Activated CD8-positive, alpha-beta T cell treated with anti-CD3 and anti-CD28 coated beads for 36 hours (primary cell): ENCODE measurements at regions of chr6 and their contacts with region 1.

Region 1: DNA sequence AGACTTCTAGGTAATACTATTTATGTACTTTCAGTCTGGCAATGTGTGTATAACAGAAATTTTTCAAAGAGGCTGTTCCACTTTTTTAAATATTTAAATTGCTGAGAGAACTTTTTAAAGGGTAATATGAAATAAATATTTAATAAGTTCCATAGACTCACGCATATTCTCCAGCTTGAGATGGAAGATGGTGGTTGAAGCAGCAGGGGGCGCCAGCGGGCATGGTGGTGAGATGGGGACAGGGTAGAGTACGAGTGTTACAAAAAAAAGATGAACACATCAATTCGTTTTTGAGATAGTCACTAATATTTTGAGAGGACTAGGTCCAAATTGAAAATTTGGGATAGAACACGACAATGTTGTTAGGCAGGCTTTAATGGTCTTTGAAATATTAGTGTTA is 68.4 kb downstream of the RSPO3 start:
- DNase-seq: peak; percentile 82
- ATAC-seq: peak; percentile 56
- H3K4me3 Mint-ChIP-seq: no peak overlapping the region
- H3K27ac Mint-ChIP-seq: no peak overlapping the region
- H3K4me1 Mint-ChIP-seq: no peaks in the 10 kb centered on the region
- H3K27me3 Mint-ChIP-seq: peaks cover 10% of the 10 kb centered on the region
- CTCF ChIP-seq: peak; percentile 78

Region 2: DNA sequence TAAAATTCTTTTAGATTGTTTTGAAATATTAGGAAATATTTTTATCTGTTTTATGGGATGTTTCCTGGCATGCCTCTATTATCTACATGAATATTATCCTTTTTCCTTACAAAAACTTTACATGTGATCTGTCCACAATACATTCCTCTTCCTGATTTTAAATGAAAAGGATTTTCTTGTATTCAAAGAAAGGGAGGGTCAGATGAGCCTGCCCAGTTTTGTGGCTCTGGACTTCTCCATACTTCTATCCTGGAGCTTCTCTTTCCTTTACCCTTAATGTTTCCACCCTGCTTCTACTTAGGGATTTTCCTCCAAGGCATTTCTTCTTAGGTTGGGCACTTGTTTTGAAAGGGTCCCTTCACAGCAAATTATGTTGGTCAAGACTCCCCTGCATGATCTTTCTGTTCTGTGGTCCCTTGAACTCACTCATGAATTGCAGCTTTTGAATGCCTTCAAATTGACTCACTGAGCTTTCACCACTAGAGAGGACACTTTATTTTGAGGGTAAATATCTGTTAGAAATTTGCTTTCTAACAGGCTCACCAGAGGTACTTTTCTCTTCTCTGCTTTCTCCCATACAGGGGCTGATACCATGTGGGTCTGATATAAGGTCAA is 742.1 kb before region 1 on chr6:
- CTCF ChIA-PET with region 1: no interaction called
- POLR2A ChIA-PET with region 1: no interaction called
- intact Hi-C with region 1: no loop called
- DNase-seq: no peak
- ATAC-seq: no peak
- H3K4me3 Mint-ChIP-seq: no peak overlapping the region
- H3K27ac Mint-ChIP-seq: no peak overlapping the region
- H3K4me1 Mint-ChIP-seq: no peaks in the 10 kb centered on the region
- H3K27me3 Mint-ChIP-seq: peaks cover 1% of the 10 kb centered on the region
- CTCF ChIP-seq: no peak

Region 3: GRCh38 chr6:127173156-127173940 is 13.5 kb before region 1 on chr6:
- CTCF ChIA-PET with region 1: interaction called, 10 read pairs
- POLR2A ChIA-PET with region 1: no interaction called
- intact Hi-C with region 1: no loop called
- DNase-seq: no peak
- ATAC-seq: no peak
- H3K4me3 Mint-ChIP-seq: no peak overlapping the region
- H3K27ac Mint-ChIP-seq: no peak overlapping the region
- H3K4me1 Mint-ChIP-seq: no peaks in the 10 kb centered on the region
- H3K27me3 Mint-ChIP-seq: peaks cover 15% of the 10 kb centered on the region
- CTCF ChIP-seq: no peak

Region 4: DNA sequence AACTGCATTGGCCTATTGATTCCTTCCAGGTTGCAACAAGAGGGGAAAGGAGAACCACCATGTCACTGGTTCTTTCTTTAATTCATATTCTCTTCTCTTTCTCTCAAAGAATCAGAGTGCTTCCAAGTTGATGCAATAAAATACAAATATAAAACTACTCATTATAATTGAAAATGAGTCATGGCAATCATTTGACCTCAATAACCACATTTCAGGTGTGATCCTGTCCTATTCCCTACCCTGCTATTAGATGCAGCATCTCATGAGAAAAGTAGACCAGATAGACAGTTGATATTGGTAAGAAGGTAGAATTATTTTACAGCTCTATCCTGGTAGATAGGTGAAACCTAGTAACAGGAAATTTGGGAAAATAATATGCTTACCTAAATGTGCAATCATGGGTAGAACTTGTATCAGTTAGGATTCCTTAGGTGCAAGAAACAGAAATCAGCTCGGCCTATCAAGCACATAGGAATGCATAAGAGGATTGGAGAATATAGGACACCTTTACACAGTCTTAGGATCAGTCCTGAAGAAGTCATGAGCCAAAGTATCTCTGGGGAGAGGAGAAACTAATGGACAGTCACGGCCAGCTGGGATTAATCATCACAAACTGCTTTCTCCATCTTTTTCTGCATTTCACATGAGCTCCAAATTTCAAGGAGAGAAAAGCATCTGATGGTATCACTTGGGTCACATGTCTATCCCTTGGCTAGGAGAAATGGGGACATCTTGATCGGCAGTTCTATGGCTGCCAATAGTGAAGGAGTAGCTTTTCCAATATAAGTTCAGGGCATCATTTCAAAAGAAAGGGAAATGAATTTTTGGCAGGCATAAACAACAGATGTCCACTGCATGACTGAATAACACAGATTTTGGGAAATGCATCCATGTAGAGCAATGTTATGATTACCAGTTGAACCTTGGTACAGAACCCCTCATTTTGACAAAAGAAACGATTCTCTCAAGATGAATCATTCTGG is 60.5 kb after region 1 on chr6:
- CTCF ChIA-PET with region 1: no interaction called
- POLR2A ChIA-PET with region 1: no interaction called
- intact Hi-C with region 1: no loop called
- DNase-seq: no peak
- ATAC-seq: no peak
- H3K4me3 Mint-ChIP-seq: no peak overlapping the region
- H3K27ac Mint-ChIP-seq: no peak overlapping the region
- H3K4me1 Mint-ChIP-seq: no peaks in the 10 kb centered on the region
- H3K27me3 Mint-ChIP-seq: peaks cover 4% of the 10 kb centered on the region
- CTCF ChIP-seq: no peak

Region 5: DNA sequence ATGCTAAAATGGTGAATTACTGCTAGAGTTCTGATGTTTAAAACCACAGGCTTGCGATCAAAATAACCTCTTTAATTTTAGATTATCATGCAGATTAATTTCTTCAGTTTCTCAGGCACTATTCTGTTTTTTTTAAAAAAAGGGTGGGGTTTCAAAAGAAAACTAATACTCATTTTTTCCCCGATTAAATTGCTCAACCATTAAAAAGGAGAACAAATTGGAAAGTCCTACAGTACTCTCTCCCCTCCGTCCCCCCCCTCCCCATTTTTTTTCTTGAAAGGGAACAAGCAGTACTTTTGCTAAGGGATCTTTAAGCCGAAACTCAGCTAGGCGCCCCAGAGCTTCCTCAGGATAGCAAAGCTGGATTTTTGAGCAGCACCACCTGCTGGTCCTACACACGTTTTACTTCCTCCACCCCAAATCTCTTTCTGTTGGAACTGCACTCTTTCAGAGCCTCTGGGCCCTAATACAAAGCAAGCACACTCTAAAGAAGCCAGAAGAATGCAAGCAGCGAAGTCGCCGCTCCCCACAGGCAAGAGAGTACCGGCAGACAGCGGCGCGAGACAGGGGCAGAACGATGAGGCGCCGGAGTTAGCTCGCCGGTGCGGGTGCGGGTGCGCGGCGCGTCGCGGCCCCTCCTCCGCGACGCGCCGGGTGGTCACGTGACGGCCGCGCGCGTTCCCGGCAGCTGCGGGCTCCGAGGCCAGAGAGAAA is 79.4 kb after region 1 on chr6 and contains the start of gene RNF146:
- CTCF ChIA-PET with region 1: interaction called, 22 read pairs
- POLR2A ChIA-PET with region 1: interaction called, 3 read pairs
- intact Hi-C with region 1: no loop called
- DNase-seq: peak; percentile 73
- ATAC-seq: peak; percentile 76
- H3K4me3 Mint-ChIP-seq: peak within 1 kb of the TSS; percentile 93
- H3K27ac Mint-ChIP-seq: peak within 1 kb of the TSS; percentile 100
- H3K4me1 Mint-ChIP-seq: peaks cover 30% of the 10 kb centered on the region
- H3K27me3 Mint-ChIP-seq: no peaks in the 10 kb centered on the region
- CTCF ChIP-seq: peak; percentile 84
- total RNA-seq, gene RNF146: 12.5 to 13.2 TPM

Region 6: GRCh38 chr6:127547215-127547614 is 360.3 kb after region 1 on chr6:
- CTCF ChIA-PET with region 1: interaction called, 3 read pairs
- POLR2A ChIA-PET with region 1: no interaction called
- intact Hi-C with region 1: loop called (anchors 10 kb)
- DNase-seq: peak; percentile 37
- ATAC-seq: peak; percentile 51
- H3K4me3 Mint-ChIP-seq: no peak overlapping the region
- H3K27ac Mint-ChIP-seq: no peak overlapping the region
- H3K4me1 Mint-ChIP-seq: no peaks in the 10 kb centered on the region
- H3K27me3 Mint-ChIP-seq: peaks cover 16% of the 10 kb centered on the region
- CTCF ChIP-seq: no peak